Activated CD4-positive, alpha-beta memory T cell treated with anti-CD3 and anti-CD28 coated beads, Interleukin-2, amount 10 ng/mL, durations not matched to agents 7 days and 5 days (primary cell): ENCODE measurements at regions of chr3 and their contacts with region 1.

Region 1: GRCh38 chr3:134794950-134795745 is at the start of gene EPHB1:
- DNase-seq: peak; percentile 72
- H3K4me3 Mint-ChIP-seq: peak within 1 kb of the TSS; percentile 79
- H3K27ac Mint-ChIP-seq: no peak within 1 kb of the TSS
- H3K4me1 Mint-ChIP-seq: peaks cover 15% of the 10 kb centered on the region
- H3K27me3 Mint-ChIP-seq: peaks cover 68% of the 10 kb centered on the region
- total RNA-seq, gene EPHB1: 0.80 to 1.2 TPM

Region 2: GRCh38 chr3:134838599-134838998 is 43.5 kb after region 1 on chr3:
- CTCF ChIA-PET with region 1: interaction called, 43 read pairs
- POLR2A ChIA-PET with region 1: no interaction called
- DNase-seq: no peak
- H3K4me3 Mint-ChIP-seq: no peak overlapping the region
- H3K27ac Mint-ChIP-seq: no peak overlapping the region
- H3K4me1 Mint-ChIP-seq: no peaks in the 10 kb centered on the region
- H3K27me3 Mint-ChIP-seq: peaks cover 7% of the 10 kb centered on the region

Region 3: GRCh38 chr3:134985864-134986715 is 190.9 kb after region 1 on chr3:
- CTCF ChIA-PET with region 1: no interaction called
- POLR2A ChIA-PET with region 1: no interaction called
- DNase-seq: no peak
- H3K4me3 Mint-ChIP-seq: no peak overlapping the region
- H3K27ac Mint-ChIP-seq: no peak overlapping the region
- H3K4me1 Mint-ChIP-seq: no peaks in the 10 kb centered on the region
- H3K27me3 Mint-ChIP-seq: no peaks in the 10 kb centered on the region

Region 4: DNA sequence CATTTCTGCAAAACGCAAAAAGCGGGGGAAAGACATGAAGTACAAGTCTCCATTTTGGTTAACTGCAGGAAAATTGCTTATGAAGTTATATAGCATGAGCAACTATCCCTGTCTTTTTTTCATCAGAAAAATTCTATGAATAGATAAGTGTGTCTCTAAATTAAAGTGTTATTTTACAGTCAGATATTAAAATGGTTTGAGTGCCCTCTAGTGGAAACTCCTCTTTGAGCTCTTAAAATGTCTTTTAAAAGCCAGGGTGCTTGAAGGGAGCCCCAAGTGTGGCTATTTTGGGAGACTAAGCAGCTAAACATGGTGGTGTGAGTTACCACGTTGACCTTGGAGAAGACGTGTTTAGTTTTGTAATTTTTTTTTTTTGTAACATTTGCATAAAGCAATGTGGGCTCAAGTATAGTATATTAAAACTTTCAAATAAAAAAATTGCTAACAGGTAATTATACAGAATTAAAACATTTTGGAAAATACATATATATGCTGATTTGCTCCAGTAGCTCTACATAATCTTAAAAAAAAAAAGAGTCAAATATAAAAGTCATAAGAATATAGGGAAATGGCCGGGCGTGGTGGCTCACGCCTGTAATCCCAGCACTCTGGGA is 1247.6 kb after region 1 on chr3:
- CTCF ChIA-PET with region 1: interaction called, 11 read pairs
- POLR2A ChIA-PET with region 1: no interaction called
- DNase-seq: no peak
- H3K4me3 Mint-ChIP-seq: no peak overlapping the region
- H3K27ac Mint-ChIP-seq: no peak overlapping the region
- H3K4me1 Mint-ChIP-seq: no peaks in the 10 kb centered on the region
- H3K27me3 Mint-ChIP-seq: peaks cover 11% of the 10 kb centered on the region